ENCODE measurements at regions of chr11 and their contacts with region 1.

Region 1: DNA sequence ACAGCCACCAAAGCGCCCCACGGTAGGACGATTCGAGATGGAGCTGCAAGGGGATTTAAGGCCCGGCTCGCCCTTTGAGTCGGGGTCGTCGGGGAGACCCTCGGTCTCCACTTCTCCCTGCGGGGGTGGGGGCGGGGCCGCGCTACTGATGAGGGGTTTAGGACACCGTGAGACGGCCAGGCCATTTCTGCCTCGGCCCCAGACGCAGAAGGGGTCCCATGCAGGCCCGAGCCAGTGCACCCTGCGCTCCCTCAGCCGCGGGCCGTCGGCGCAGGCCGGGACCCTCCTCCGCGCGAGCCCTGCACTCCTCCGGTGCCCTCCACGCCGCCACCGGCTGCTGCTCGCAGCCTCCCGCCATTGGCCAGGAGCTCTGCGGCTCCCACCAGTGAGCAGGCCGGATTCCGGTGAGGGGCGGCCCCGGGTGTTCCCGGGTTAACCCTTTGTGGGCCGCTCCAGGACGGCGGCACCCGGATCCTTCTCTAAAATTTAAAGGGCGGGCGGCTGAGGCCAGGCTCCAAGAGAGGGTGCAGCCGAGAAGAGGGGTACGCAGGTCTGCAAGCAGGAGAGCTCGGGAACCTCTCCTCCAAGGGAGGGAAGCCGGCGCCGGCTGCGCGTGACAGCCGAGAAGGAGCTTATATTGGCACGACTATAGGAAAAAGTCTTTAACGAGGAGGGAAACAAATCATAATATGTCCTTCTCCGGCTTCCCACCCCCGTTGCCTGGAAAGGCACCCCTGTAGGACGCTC is 18.0 kb downstream of the CREB3L1 start:
- DNase-seq: no peak
- H3K4me3 ChIP-seq: peak overlapping the region; percentile 59
- CTCF ChIP-seq: no peak

Region 2: GRCh38 chr11:46247664-46248063 is 47.8 kb before region 1 on chr11:
- CTCF ChIA-PET with region 1: interaction called, 167 read pairs
- POLR2A ChIA-PET with region 1: interaction called, 28 read pairs
- DNase-seq: no peak
- H3K4me3 ChIP-seq: no peak overlapping the region
- CTCF ChIP-seq: peak; percentile 5

Region 3: DNA sequence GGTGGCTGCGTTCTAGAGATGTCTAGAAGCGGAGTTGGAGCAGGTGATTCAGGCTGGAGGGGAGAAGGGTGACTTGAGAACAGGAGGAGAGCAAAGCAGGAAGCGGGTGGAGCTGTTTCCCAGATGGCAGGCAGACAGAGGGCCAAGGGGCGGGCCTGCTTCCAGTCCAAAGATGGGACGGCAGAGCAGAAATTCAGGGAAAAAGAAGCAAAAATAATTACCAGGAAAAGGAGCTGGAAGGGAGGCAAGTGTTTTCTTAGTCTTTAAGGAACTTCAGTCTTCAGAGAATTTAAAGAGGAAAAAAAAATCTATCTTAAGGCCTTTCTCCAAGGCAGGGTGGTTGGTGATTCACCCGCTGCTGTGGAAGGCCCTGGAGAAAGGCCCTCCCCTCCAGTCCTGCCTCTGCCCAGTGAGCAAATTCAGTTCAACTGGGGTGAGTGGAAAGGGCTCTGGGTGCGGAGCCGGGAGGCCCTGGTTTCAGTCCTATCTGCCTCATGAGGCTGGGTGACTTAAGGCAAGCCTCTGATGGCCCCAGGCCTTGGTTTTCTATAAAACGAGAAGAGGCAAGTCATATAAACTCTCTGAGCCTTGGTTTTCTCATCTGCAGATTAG is 22.6 kb before region 1 on chr11:
- CTCF ChIA-PET with region 1: interaction called, 79 read pairs
- POLR2A ChIA-PET with region 1: interaction called, 58 read pairs
- DNase-seq: no peak
- H3K4me3 ChIP-seq: no peak overlapping the region
- CTCF ChIP-seq: no peak

Region 4: GRCh38 chr11:46278387-46279125 is 16.9 kb before region 1 on chr11:
- CTCF ChIA-PET with region 1: interaction called, 79 read pairs
- POLR2A ChIA-PET with region 1: interaction called, 58 read pairs
- DNase-seq: no peak
- H3K4me3 ChIP-seq: peak overlapping the region; percentile 95
- CTCF ChIP-seq: peak; percentile 90

Region 5: DNA sequence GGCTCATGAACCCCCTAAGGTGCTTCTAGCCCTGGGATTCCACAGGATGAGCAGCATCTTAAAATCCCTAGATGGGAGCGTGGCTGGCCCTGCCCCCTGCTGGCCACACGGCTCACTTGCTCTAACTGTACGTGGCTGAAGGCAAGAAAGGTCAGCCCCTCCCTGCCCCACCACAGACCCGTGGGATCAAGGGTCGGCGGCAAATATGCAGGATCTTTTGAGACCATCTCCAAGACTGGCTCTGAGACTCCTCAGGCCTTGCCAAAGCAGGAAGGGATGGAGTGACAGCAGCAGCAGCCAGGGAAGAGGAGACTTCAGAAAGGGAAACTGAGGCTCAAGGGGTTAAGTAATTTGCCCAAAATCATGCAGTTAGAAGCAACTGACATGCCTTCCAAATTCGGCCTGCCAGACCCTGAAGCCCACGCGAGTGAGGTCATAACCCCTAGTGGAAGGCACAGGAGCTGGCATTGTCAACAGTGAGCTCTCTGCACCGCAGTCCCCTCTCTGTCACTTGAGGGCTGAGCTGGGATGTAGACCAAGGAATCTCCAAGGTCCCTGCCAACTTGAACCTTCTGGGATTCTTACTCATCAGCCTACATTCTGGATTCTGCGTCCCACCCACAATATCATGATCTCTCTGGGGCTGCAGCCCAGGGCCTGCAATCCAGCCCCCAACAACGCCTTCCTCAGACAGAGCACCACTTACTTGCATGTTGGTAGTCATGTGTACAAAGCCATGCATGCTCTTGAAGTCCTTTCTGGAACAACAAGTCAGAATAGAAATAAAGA is 13.3 kb after region 1 on chr11:
- CTCF ChIA-PET with region 1: interaction called, 78 read pairs
- POLR2A ChIA-PET with region 1: interaction called, 7 read pairs
- DNase-seq: no peak
- H3K4me3 ChIP-seq: no peak overlapping the region
- CTCF ChIP-seq: peak; percentile 86

Region 6: DNA sequence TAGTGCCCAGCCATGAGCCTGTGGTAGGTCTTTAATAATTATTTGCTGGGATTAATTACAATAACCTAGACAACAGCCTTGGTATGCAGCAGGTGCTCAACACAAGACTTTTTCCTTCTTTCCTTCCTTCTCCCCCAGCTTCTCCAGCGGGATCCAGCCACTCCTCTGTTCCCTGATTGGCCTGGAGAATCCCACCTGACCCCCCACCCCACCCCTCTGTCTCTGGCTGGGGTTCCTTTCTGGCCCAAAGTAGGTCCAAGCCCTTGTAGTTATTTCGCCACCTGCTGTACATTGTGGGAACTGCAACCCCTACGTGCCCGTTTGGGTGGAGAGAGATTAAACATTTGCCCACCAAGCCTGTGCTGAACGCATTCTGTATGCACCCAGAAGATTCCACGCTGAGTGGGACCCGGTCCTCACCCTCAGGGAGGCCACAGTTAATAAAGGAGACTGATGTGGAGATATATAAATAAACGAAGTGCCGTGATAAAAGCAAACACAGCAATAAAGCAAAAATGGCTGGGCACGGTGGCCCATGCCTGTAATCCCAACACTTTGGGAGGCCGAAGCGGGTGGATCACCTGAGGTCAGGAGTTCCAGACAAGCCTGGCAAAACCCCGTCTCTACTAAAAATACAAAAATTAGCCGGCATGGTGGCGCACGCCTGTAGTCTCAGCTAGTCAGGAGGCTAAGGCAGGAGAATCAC is 19.7 kb after region 1 on chr11:
- CTCF ChIA-PET with region 1: interaction called, 78 read pairs
- POLR2A ChIA-PET with region 1: interaction called, 3 read pairs
- DNase-seq: no peak
- H3K4me3 ChIP-seq: no peak overlapping the region
- CTCF ChIP-seq: peak; percentile 71